Transverse colon (tissue), 4 donors: ENCODE measurements at regions of chr2 and their contacts with region 1.

Region 1: DNA sequence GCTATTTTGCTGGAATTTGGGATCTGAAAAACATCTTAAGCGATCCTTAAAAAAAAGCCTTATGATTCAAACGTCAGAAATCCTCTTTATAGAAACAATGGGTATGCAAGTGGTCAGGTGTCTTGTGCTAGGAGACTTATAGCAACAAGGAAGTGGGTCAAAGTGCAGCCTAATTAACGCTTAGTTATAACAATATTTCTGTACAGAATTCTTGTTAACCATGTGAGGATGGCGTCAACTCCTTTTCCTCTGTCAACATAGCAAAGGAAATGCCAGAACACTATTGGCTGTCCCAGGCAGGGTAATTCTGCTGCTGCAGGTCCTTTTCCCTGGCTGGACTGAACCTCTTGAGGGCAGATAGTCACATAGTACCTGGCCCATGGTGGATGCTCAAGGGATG is 189.4 kb downstream of the MSH2 start:
- DNase-seq: no peak
- H3K4me3 ChIP-seq: no peak overlapping the region
- H3K27ac ChIP-seq: no peak overlapping the region
- H3K4me1 ChIP-seq: no peaks in the 10 kb centered on the region
- H3K27me3 ChIP-seq: no peaks in the 10 kb centered on the region
- CTCF ChIP-seq: no peak
- EP300 ChIP-seq: no peak
- POLR2A ChIP-seq: no peak

Region 2: GRCh38 chr2:47551800-47552525 is 40.4 kb before region 1 on chr2:
- in situ Hi-C with region 1: no loop called
- intact Hi-C with region 1: loop called (anchors 1 kb)
- DNase-seq: no peak
- H3K4me3 ChIP-seq: no peak overlapping the region
- H3K27ac ChIP-seq: no peak overlapping the region
- H3K4me1 ChIP-seq: no peaks in the 10 kb centered on the region
- H3K27me3 ChIP-seq: no peaks in the 10 kb centered on the region
- CTCF ChIP-seq: no peak
- EP300 ChIP-seq: no peak
- POLR2A ChIP-seq: no peak